IMR-90 (cell line): ENCODE measurements at regions of chr17 and their contacts with region 1.

Region 1: GRCh38 chr17:40707720-40708119 is 4.2 kb upstream of the KRT24 start:
- DNase-seq: no peak
- ATAC-seq: no peak
- H3K4me3 ChIP-seq: no peak overlapping the region
- H3K27ac ChIP-seq: no peak overlapping the region
- H3K4me1 ChIP-seq: no peaks in the 10 kb centered on the region
- H3K27me3 ChIP-seq: peaks cover 32% of the 10 kb centered on the region
- CTCF ChIP-seq: no peak
- POLR2A ChIP-seq: no peak
- RAD21 ChIP-seq: no peak

Region 2: GRCh38 chr17:40750391-40750790 is 42.7 kb after region 1 on chr17:
- CTCF ChIA-PET with region 1: no interaction called
- POLR2A ChIA-PET with region 1: no interaction called
- dilution Hi-C with region 1: no loop called
- in situ Hi-C with region 1: no loop called
- intact Hi-C with region 1: loop called (anchors 10 kb)
- DNase-seq: no peak
- ATAC-seq: no peak
- H3K4me3 ChIP-seq: no peak overlapping the region
- H3K27ac ChIP-seq: no peak overlapping the region
- H3K4me1 ChIP-seq: no peaks in the 10 kb centered on the region
- H3K27me3 ChIP-seq: peaks cover 24% of the 10 kb centered on the region
- CTCF ChIP-seq: no peak
- POLR2A ChIP-seq: no peak
- RAD21 ChIP-seq: no peak